Heart left ventricle (tissue), 16 donors: ENCODE measurements at regions of chr4 and their contacts with region 1.

Region 1: GRCh38 chr4:145618932-145619638 is at the start of gene MMAA:
- DNase-seq: peak; percentile 96 to 98 (median 97)
- ATAC-seq: peak; percentile 99 to 100 (median 100)
- H3K4me3 ChIP-seq: peak within 1 kb of the TSS; percentile 60 to 89 (median 78)
- H3K27ac ChIP-seq: peak within 1 kb of the TSS; percentile 88 to 98 (median 94)
- H3K4me1 ChIP-seq: peaks cover 0 to 35% (median 11%) of the 10 kb centered on the region in 12 donors
- H3K27me3 ChIP-seq: no peaks in the 10 kb centered on the region
- CTCF ChIP-seq: peak; percentile 43 to 87 (median 68)
- POLR2A ChIP-seq: peak; percentile 50 to 92
- total RNA-seq, gene MMAA: 3.3 to 12.6 (median 8.7) TPM

Region 2: DNA sequence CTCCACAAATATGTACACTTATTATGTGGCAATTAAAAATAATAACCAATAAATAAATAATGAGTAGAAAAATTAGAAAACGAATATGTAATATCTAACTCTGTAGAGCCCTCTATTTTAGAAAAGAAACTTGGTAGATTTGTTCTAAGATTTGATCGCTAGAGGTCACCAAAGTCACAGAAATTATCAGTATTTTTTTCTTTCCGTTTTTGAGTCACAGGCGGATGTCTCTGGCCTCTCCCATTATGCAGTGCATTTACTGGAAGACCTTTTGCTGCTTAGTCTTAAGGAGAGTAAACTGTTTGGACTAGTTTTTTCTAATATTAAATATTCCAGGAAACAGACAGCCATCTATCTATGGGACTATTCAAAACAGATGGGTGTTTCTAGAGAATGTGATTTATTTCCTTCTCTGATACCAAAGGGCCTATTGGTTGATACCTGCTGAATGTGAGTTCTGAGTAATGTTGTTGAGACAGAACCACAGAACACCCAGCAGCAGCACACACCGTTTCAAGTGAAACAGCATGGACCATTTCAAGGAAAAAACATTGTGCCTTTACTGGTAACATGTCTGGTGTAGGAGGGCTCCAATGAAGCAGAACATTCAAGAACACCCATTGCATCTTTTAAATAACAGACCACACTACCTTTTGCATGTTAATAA is 1444.6 kb before region 1 on chr4:
- intact Hi-C with region 1: loop called in 4 of 10 experiments (anchors 10 kb)
- DNase-seq: no peak
- ATAC-seq: peak in 3 of 4 donors; percentile 54 to 72 (median 62)
- H3K4me3 ChIP-seq: no peak overlapping the region
- H3K27ac ChIP-seq: no peak overlapping the region
- H3K4me1 ChIP-seq: peaks cover 0 to 3% (median 0%) of the 10 kb centered on the region in 12 donors
- H3K27me3 ChIP-seq: no peaks in the 10 kb centered on the region
- CTCF ChIP-seq: peak; percentile 21 to 63 (median 48)
- POLR2A ChIP-seq: no peak

Region 3: GRCh38 chr4:145216535-145216934 is 402.6 kb before region 1 on chr4:
- intact Hi-C with region 1: loop called in 5 of 10 experiments (anchors 5 kb)
- DNase-seq: no peak
- ATAC-seq: no peak
- H3K4me3 ChIP-seq: no peak overlapping the region
- H3K27ac ChIP-seq: no peak overlapping the region
- H3K4me1 ChIP-seq: peaks cover 0 to 9% (median 0%) of the 10 kb centered on the region in 12 donors
- H3K27me3 ChIP-seq: no peaks in the 10 kb centered on the region
- CTCF ChIP-seq: peak in 11 of 12 donors; percentile 33 to 66 (median 53)
- POLR2A ChIP-seq: no peak

Region 4: GRCh38 chr4:145260091-145260490 is 359.0 kb before region 1 on chr4:
- intact Hi-C with region 1: no loop called
- DNase-seq: no peak
- ATAC-seq: no peak
- H3K4me3 ChIP-seq: no peak overlapping the region
- H3K27ac ChIP-seq: no peak overlapping the region
- H3K4me1 ChIP-seq: no peaks in the 10 kb centered on the region
- H3K27me3 ChIP-seq: no peaks in the 10 kb centered on the region
- CTCF ChIP-seq: no peak
- POLR2A ChIP-seq: no peak

Region 5: GRCh38 chr4:145557720-145558119 is 61.4 kb before region 1 on chr4:
- intact Hi-C with region 1: loop called in 2 of 10 experiments (anchors 5 to 10 kb)
- DNase-seq: peak in 4 of 5 donors; percentile 41 to 57 (median 46)
- ATAC-seq: peak; percentile 77 to 89 (median 87)
- H3K4me3 ChIP-seq: no peak overlapping the region
- H3K27ac ChIP-seq: no peak overlapping the region
- H3K4me1 ChIP-seq: no peaks in the 10 kb centered on the region
- H3K27me3 ChIP-seq: no peaks in the 10 kb centered on the region
- CTCF ChIP-seq: peak; percentile 75 to 96 (median 86)
- POLR2A ChIP-seq: no peak

Region 6: GRCh38 chr4:145732895-145733880 is 114.1 kb after region 1 on chr4:
- intact Hi-C with region 1: loop called in 8 of 10 experiments (anchors 2 to 10 kb)
- DNase-seq: peak; percentile 97
- ATAC-seq: peak; percentile 81 to 96 (median 93)
- H3K4me3 ChIP-seq: peak overlapping the region; percentile 8 to 82 (median 66)
- H3K27ac ChIP-seq: peak overlapping the region; percentile 88 to 99 (median 96)
- H3K4me1 ChIP-seq: peaks cover 13 to 57% (median 46%) of the 10 kb centered on the region in 12 donors
- H3K27me3 ChIP-seq: no peaks in the 10 kb centered on the region
- CTCF ChIP-seq: peak in 3 of 12 donors; percentile 2 to 36 (median 14)
- POLR2A ChIP-seq: peak in 1 of 2 donors; percentile 76

Region 7: DNA sequence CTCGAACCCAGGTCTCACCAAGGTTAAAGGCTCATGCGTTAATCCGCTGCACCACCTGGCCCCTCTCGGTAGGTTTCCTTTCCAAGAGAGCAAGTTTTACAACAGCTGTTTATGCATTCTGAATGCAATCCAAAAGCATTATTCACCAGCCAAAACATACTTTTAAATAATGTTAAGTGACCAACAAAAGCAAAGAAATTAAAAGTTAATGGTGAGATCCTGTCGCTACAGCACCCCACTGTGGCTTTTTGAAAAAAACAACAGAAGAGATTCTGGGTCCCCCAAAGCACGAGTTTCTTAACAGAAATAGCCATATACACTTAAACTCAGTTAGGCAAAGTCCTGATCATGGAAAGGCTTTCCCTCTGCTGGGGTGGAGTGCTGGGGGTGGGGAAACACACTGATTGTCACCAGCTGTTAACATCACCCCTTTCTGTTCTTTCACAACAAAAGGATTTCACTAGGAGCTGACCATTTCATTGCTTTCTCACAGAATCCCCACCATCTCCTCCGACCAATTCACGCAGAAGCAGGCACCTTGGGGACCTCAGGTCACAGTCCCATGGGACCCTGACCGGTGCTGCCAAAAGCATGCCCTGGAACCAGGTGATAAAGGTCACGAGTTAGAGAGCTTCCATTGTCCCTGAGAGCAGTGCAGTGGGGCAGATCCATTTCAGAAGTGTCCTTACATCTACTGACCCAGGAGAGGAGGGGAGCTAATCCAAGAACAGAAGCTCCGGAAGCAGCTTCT is 268.3 kb after region 1 on chr4:
- intact Hi-C with region 1: loop called in 3 of 10 experiments (anchors 2 to 5 kb)
- DNase-seq: peak in 2 of 5 donors; percentile 25 to 45
- ATAC-seq: peak; percentile 38 to 78 (median 56)
- H3K4me3 ChIP-seq: peak overlapping the region in 1 of 12 donors; percentile 2
- H3K27ac ChIP-seq: peak overlapping the region in 10 of 12 donors; percentile 34 to 77 (median 54)
- H3K4me1 ChIP-seq: peaks cover 3 to 38% (median 20%) of the 10 kb centered on the region in 12 donors
- H3K27me3 ChIP-seq: no peaks in the 10 kb centered on the region
- CTCF ChIP-seq: peak in 7 of 12 donors; percentile 10 to 46 (median 35)
- POLR2A ChIP-seq: no peak